ENCODE measurements at regions of chrX and their contacts with region 1.

Region 1: DNA sequence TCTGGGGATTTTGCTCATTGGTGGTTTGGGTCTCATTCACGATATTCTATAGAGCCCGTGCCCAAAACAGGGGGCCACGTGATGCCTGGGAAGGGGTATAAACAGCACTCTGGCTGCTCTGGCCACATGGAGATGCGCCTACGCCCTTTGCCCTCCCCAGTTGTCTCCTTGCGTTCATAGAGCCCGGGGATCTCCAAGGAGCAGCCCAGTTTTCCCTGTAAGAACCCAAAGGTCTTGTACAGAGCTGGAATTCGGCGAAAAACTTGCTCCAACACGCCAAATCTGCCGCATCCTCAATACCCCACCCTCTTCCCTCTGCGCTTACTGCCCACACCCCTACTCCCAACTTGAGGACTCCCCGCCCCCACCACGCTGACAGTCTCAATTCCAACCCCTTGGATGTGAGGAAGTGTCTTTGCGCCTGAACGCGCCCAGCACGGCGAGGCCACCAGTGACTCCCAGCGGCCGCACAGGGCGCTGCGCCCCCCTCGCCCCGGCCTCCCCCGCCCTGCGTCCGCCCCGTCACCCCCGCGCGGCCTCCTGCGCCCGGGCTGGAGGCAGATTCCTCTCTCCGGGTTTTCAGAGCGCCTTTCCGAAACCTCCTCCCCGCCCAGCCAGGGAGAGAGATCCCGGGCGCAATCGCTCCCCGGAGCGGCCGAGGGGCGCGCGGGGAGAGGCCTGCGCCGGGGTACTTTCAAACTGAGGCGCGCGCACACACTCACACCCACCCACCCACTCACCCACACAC is at the start of gene NHS:
- DNase-seq: peak; percentile 63
- ATAC-seq: peak; percentile 78
- H3K4me3 ChIP-seq: peak within 1 kb of the TSS; percentile 98
- H3K27ac ChIP-seq: peak within 1 kb of the TSS; percentile 32
- H3K4me1 ChIP-seq: no peaks in the 10 kb centered on the region
- H3K27me3 ChIP-seq: peaks cover 4% of the 10 kb centered on the region
- CTCF ChIP-seq: peak; percentile 36; the same call in 1 of the 2 replicates
- POLR2A ChIP-seq: no peak
- RAD21 ChIP-seq: peak; percentile 26; the same call in 1 of the 2 replicates
- total RNA-seq, gene NHS: 0.83 and 0.90 TPM in 2 replicates

Region 2: GRCh38 chrX:17242470-17242869 is 132.3 kb before region 1 on chrX:
- CTCF ChIA-PET with region 1: no interaction called
- POLR2A ChIA-PET with region 1: no interaction called
- dilution Hi-C with region 1: no loop called
- in situ Hi-C with region 1: no loop called
- intact Hi-C with region 1: loop called (anchors 1 kb)
- DNase-seq: peak; percentile 55
- ATAC-seq: peak; percentile 88
- H3K4me3 ChIP-seq: no peak overlapping the region
- H3K27ac ChIP-seq: no peak overlapping the region
- H3K4me1 ChIP-seq: no peaks in the 10 kb centered on the region
- H3K27me3 ChIP-seq: peaks cover 6% of the 10 kb centered on the region
- CTCF ChIP-seq: peak; percentile 76
- POLR2A ChIP-seq: no peak
- RAD21 ChIP-seq: peak; percentile 70

Region 3: DNA sequence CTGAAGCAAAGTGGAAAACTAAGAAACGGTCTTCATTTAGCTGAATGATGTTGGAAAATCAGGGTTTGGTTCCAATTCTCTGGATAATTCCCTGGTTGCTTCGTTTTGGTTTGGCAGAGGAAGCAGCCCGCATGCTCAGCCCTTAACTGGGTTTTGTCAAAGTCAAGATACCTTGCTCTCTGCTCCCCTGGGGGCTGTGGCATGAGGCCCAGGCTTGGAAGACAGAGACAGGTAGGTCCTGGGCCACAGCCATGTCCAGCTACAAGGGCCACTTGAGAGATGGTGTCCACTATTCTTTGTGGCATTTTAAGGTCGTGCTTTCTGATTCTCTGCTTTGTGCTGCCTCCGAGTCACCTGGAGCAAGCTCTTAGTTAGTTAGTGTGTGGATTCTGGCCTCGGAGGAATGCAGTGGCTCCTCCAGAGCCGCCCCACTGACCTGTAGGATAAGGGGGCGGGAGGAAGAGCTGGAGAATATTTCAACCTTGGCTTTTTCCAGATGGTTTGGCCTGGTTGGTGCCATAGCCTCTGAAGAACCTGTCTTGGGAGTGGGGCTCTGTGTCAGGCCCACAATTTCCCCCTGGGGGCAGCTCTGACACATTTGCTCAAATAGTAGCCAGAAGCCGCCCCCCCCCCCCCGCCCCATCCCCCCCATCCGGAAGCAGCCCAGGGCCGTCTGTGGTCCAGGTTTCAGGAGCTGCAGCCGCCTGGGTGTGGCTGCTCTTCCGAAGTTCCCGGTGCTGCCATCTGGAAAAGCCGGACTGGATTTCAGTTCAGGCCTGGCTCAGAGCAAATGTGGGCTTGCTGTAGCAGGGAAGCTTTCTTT is 147.3 kb after region 1 on chrX:
- CTCF ChIA-PET with region 1: interaction called, 3 read pairs
- POLR2A ChIA-PET with region 1: no interaction called
- dilution Hi-C with region 1: no loop called
- in situ Hi-C with region 1: loop called (anchors 10 kb)
- intact Hi-C with region 1: loop called (anchors 2 kb)
- DNase-seq: peak; percentile 45
- ATAC-seq: no peak
- H3K4me3 ChIP-seq: no peak overlapping the region
- H3K27ac ChIP-seq: no peak overlapping the region
- H3K4me1 ChIP-seq: peaks cover 4% of the 10 kb centered on the region; the same call in 1 of the 2 replicates
- H3K27me3 ChIP-seq: no peaks in the 10 kb centered on the region
- CTCF ChIP-seq: no peak
- POLR2A ChIP-seq: no peak
- RAD21 ChIP-seq: no peak

Region 4: GRCh38 chrX:17590892-17591740 is 216.3 kb after region 1 on chrX:
- CTCF ChIA-PET with region 1: no interaction called
- POLR2A ChIA-PET with region 1: no interaction called
- dilution Hi-C with region 1: no loop called
- in situ Hi-C with region 1: no loop called
- intact Hi-C with region 1: loop called (anchors 1 kb)
- DNase-seq: peak; percentile 80
- ATAC-seq: peak; percentile 87
- H3K4me3 ChIP-seq: no peak overlapping the region
- H3K27ac ChIP-seq: peak overlapping the region; percentile 33; the same call in 1 of the 2 replicates
- H3K4me1 ChIP-seq: peaks cover 5% of the 10 kb centered on the region
- H3K27me3 ChIP-seq: no peaks in the 10 kb centered on the region
- CTCF ChIP-seq: peak; percentile 80
- POLR2A ChIP-seq: no peak
- RAD21 ChIP-seq: peak; percentile 83

Region 5: DNA sequence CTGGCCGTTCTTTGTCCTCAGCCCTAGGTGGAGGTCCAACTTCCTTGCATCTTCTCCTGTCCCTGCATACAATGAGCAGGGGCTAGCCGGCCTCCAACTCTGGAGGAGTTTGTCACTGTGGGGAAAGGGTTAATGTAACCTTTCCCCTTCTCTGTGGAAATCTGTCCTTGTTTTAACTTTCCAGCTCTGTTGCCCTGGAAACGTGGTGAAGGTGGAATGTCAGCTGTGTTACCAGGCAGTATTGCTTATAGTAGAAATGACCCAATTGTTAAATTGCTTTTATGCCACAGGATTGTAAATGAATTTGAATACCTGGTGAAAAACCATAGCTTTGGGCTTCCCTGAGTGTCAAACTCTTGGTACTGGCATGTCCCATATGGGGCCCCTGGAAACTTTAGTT is 230.9 kb after region 1 on chrX:
- CTCF ChIA-PET with region 1: no interaction called
- POLR2A ChIA-PET with region 1: no interaction called
- dilution Hi-C with region 1: no loop called
- in situ Hi-C with region 1: no loop called
- intact Hi-C with region 1: no loop called
- DNase-seq: peak; percentile 42
- ATAC-seq: peak; percentile 29
- H3K4me3 ChIP-seq: no peak overlapping the region
- H3K27ac ChIP-seq: no peak overlapping the region
- H3K4me1 ChIP-seq: peaks cover 5% of the 10 kb centered on the region
- H3K27me3 ChIP-seq: no peaks in the 10 kb centered on the region; the same call in 1 of the 2 replicates
- CTCF ChIP-seq: no peak
- POLR2A ChIP-seq: no peak
- RAD21 ChIP-seq: no peak

Region 6: DNA sequence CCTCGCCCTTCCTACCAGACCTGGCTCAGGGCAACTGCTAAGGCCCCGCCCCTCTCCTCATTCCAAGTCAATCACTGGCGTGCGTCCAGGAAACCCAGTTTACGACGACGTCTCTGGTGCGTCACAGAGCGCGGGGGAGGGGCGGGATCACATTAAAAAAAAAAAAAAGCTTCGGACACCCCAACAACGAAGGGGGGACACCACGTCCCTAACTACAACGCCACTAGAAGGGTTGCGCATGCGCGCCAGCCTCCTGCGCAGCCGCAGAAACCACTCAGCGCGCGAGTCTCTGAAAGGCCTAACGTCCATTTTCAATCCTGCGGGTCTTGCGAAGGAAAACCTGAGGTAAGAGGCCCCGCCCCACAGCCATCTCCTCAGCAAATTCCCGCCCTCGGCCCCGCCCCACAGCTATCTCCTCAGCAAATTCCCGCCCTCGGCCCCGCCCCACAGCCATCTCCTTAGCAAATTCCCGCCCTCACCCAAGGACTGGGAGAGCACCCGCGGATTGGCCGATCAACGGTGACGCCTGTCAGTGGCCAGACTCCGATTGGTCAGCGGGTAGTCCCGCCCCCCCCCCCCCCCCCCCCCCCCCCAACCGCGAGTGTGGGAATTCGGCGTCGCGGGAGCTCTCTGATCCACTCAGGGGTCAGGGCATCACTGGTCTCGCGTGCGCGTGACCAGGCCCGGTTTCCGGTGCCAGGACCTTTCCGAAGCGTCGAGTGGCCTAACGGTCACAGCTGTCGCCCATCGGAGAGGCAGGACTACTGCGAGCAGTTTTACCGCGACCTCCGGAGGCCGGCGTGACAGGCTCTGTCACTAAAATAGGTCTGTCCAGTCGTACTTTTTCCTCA is 362.3 kb after region 1 on chrX and contains the start of gene SCML1:
- CTCF ChIA-PET with region 1: no interaction called
- POLR2A ChIA-PET with region 1: no interaction called
- dilution Hi-C with region 1: no loop called
- in situ Hi-C with region 1: no loop called
- intact Hi-C with region 1: loop called (anchors 5 kb)
- DNase-seq: peak; percentile 95
- ATAC-seq: peak; percentile 94
- H3K4me3 ChIP-seq: peak within 1 kb of the TSS; percentile 89
- H3K27ac ChIP-seq: peak within 1 kb of the TSS; percentile 77
- H3K4me1 ChIP-seq: peaks cover 2% of the 10 kb centered on the region
- H3K27me3 ChIP-seq: no peaks in the 10 kb centered on the region
- CTCF ChIP-seq: no peak
- POLR2A ChIP-seq: peak; percentile 75
- RAD21 ChIP-seq: no peak
- total RNA-seq, gene SCML1: 4.1 and 6.7 TPM in 2 replicates